Activated naive CD4-positive, alpha-beta T cell treated with anti-CD3 and anti-CD28 coated beads for 36 hours (primary cell): ENCODE measurements at regions of chr17 and their contacts with region 1.

Region 1: DNA sequence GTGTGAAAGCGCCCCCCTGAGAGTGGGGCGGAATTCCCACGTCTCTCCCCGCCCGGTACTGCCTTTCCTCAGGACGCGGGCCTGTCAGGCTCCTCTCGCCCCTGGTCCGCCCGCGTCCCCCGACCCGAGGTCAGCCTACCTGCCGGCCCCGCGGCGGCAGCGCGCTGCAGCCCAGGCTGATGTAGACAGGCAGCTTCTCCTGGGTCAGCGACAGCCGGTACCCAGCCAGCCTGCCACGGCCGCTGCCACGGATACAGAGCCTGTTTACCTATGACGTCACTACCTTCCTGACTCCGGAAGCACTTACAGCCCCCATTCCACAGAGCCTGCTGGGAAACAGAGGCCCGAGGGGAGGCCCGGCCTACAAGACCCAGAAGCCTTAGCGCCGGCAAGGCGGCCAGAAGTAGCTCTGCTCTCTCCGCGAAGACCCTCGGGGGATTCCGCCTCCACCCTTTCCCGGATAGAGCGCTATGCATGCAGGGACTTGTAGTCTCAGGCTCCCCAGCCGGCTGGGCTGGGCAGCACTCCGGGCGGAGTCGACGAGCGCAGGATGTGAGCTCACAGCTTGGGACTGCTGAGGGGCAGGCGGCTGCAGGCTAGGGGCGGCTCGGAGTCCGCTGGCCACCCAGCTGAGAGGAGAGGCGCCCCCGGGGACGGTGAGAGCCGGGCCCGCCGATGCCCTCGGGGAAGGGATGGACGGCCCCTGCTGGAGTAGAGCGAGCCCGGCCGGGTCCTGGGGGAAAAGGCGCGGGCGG is at the starts of genes IFT20 and TNFAIP1:
- DNase-seq: peak; percentile 99
- H3K4me3 Mint-ChIP-seq: peak within 1 kb of the TSS; percentile 95
- H3K27ac Mint-ChIP-seq: peak within 1 kb of the TSS; percentile 90
- H3K4me1 Mint-ChIP-seq: peaks cover 34% of the 10 kb centered on the region
- H3K27me3 Mint-ChIP-seq: no peaks in the 10 kb centered on the region
- total RNA-seq, gene IFT20: 17.9 to 18.1 TPM
- total RNA-seq, gene TNFAIP1: 18.6 to 18.7 TPM

Region 2: DNA sequence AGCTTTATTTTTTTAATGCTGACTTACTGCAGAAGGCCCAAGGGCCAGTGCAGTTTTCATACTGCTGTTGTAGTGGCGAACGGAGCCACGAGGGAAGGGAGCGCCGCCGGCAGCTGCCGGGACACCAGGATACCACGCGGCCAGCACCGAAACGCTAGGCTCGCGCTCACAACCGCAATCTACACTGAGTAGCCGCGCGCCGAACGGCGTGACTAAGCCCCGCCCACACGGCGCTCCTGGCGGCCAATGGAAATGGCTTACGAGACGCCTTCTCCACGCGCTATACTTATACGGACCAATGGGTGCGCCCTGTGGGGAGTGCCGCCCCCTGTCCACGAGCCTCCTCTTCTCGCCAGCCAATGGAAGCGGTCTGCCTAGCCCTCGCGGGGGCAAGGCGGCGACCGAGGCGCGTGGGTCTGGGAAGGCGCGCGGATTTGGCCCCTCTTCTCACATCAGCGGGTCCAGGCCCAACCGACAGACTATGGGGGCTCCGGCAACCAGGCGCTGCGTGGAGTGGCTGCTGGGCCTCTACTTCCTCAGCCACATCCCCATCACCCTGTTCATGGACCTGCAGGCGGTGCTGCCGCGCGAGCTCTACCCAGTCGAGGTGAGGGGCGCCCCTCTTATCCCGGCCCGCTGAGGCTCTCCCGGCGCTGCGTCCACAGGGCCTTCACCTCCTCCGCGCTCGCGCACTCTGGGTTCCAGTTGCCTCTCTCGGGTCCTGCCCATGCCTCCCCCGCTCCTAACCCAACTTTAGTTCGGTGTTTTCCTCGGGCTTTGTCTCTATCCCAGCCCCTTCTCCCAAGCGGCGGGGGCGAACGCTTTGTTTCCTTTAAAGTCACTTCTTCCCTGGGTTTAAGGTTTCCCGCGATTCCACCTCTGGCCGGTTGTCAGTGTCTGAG is 16.4 kb before region 1 on chr17 and contains the start of gene TMEM97:
- CTCF ChIA-PET with region 1: interaction called, 6 read pairs
- intact Hi-C with region 1: loop called (anchors 1 kb)
- DNase-seq: peak; percentile 95
- H3K4me3 Mint-ChIP-seq: peak within 1 kb of the TSS; percentile 81
- H3K27ac Mint-ChIP-seq: peak within 1 kb of the TSS; percentile 75
- H3K4me1 Mint-ChIP-seq: peaks cover 24% of the 10 kb centered on the region
- H3K27me3 Mint-ChIP-seq: no peaks in the 10 kb centered on the region
- total RNA-seq, gene TMEM97: 25.1 to 26.0 TPM

Region 3: DNA sequence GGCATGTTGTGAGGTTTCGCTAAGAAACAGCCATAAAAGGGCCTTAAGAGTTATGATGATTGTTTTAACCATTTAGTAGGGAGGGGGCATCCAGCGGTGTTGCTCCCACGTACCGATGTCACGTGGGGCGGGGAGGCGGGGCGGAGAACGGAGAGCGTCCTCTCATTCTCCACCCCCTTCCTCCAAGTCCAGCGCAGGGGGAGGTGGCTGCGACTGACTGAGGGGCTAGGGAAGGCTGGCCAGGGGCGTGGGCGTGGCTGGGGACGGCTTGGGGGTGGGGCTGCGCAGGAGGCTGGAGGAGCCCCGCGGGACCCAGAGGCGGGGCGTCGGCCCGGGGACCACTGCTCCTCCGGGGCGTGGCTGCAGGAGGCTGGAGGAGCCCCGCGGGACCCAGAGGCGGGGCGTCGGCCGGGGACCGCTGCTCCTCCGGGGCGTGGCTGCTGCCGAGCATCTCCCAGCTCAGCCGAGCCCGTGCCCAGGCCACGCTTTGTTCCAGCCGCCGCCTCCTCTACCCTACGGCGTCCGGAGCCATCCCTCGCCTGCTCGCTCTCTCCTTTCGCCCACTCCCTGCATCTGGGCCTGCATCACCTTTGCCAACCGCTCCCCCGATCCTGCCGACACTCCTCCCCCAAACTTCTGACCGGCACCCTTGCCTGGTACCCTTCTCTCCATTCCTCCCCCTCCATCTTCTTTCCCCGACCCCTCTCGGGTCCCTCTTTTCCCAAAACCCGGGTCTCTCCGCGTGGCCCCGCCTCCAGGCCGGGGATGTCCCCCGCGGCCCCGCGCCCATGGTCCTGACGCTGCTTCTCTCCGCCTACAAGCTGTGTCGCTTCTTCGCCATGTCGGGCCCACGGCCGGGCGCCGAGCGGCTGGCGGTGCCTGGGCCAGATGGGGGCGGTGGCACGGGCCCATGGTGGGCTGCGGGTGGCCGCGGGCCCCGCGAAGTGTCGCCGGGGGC is 36.1 kb after region 1 on chr17 and contains the start of gene SARM1:
- CTCF ChIA-PET with region 1: no interaction called
- intact Hi-C with region 1: loop called (anchors 1 kb)
- DNase-seq: peak; percentile 85
- H3K4me3 Mint-ChIP-seq: peak within 1 kb of the TSS; percentile 89
- H3K27ac Mint-ChIP-seq: peak within 1 kb of the TSS; percentile 47
- H3K4me1 Mint-ChIP-seq: peaks cover 21% of the 10 kb centered on the region
- H3K27me3 Mint-ChIP-seq: no peaks in the 10 kb centered on the region
- total RNA-seq, gene SARM1: 11.7 to 12.3 TPM

Region 4: DNA sequence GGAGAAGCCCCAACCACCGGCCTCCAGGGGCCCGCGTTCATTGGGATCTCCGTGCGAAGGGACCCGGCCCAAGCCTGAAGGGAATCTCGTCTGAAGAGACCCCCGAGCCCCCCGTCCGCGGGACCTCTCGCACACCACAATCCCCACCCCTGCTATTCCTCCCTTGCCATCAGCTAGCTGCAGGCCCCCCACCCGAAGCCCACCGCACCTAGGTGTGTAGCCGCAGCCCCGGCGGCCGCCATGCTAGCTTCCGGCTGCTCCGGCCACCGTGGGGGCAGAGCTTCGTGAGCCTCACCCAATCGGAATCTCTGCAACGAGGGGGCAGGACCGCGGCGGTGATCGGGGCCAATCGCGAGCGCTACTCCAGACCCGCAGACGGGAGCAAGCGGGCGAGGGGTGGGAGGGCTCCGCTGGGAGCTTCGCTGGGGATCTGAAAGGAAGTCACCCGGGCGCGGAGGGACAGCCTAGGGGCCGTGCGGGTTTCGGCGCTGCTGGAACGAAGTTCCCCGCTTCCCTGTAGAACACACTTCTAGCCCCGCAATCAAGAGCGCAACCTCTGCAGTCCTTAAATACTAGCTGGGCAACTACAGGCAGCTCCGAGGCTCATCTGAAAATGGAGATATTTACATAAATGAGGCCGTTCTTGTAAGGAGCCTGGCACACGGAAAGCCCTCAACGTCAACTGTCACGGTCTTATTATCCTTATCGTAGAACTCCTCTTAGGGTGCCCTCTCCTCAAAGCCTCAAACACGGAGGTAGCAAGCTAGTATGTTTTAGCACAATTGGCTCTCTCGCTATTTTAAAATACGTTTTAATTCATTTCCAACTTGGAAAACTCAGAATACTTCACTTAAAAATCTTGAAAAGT is 236.1 kb after region 1 on chr17 and contains the start of gene PIGS:
- CTCF ChIA-PET with region 1: no interaction called
- intact Hi-C with region 1: loop called (anchors 5 kb)
- DNase-seq: peak; percentile 96
- H3K4me3 Mint-ChIP-seq: peak within 1 kb of the TSS; percentile 85
- H3K27ac Mint-ChIP-seq: peak within 1 kb of the TSS; percentile 91
- H3K4me1 Mint-ChIP-seq: peaks cover 50% of the 10 kb centered on the region
- H3K27me3 Mint-ChIP-seq: no peaks in the 10 kb centered on the region
- total RNA-seq, gene PIGS: 34.8 to 36.0 TPM

Region 5: GRCh38 chr17:28717578-28718333 is 382.4 kb after region 1 on chr17 and contains the start of gene RAB34:
- CTCF ChIA-PET with region 1: no interaction called
- intact Hi-C with region 1: loop called (anchors 1 kb)
- DNase-seq: peak; percentile 22
- H3K4me3 Mint-ChIP-seq: peak within 1 kb of the TSS; percentile 66
- H3K27ac Mint-ChIP-seq: peak within 1 kb of the TSS; percentile 59
- H3K4me1 Mint-ChIP-seq: peaks cover 33% of the 10 kb centered on the region
- H3K27me3 Mint-ChIP-seq: peaks cover 25% of the 10 kb centered on the region
- total RNA-seq, gene RAB34: 10.2 to 12.3 TPM